CD4-positive, alpha-beta T cell (primary cell): ENCODE measurements at regions of chr1 and their contacts with region 1.

Region 1: GRCh38 chr1:193121616-193122593 is at the start of gene CDC73:
- DNase-seq: peak; percentile 97 to 100 (median 99)
- ATAC-seq: peak; percentile 92
- H3K4me3 ChIP-seq: peak within 1 kb of the TSS; percentile 96
- H3K4me3 Mint-ChIP-seq: peak within 1 kb of the TSS; percentile 97
- H3K27ac ChIP-seq: peak within 1 kb of the TSS; percentile 91 to 94
- H3K27ac Mint-ChIP-seq: peak within 1 kb of the TSS; percentile 97
- H3K4me1 ChIP-seq: peaks cover 27% of the 10 kb centered on the region
- H3K4me1 Mint-ChIP-seq: peaks cover 54% of the 10 kb centered on the region
- H3K27me3 ChIP-seq: no peaks in the 10 kb centered on the region
- H3K27me3 Mint-ChIP-seq: no peaks in the 10 kb centered on the region
- CTCF ChIP-seq: peak; percentile 94
- total RNA-seq, gene CDC73: 65.4 to 66.5 TPM

Region 2: DNA sequence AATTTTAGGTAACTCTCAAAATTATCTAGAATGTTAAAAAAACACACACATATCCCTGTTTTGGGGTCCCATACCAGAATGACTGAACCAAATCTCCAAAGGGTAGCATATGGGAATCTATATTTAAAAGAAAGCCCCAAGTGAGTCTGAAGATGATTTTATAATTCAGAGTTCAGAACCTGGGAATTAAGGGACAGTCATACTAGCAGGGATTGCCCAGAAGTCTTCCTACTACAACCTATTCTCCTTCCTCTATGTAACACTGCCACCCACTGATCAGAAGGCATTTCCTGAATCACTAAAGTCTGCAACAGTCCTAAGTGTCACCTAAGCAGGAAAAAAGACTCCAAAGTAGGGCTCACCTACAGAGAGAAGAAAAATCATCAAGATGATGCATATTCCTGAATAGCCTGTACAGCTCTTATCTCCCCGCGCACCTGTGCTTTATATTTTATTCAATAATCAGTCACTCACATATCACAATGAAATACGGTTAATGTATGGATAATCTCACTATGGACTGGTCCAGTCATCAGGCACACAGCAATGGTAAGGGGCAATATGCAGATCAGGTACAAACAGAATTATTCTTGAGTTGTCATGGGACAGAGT is 541.4 kb before region 1 on chr1:
- CTCF ChIA-PET with region 1: no interaction called
- POLR2A ChIA-PET with region 1: no interaction called
- intact Hi-C with region 1: loop called in 1 of 2 experiments (anchors 5 kb)
- DNase-seq: peak in 4 of 14 experiments; percentile 36 to 72 (median 60)
- ATAC-seq: peak; percentile 30
- H3K4me3 ChIP-seq: no peak overlapping the region
- H3K4me3 Mint-ChIP-seq: no peak overlapping the region
- H3K27ac ChIP-seq: no peak overlapping the region
- H3K27ac Mint-ChIP-seq: peak overlapping the region; percentile 48
- H3K4me1 ChIP-seq: peaks cover 4% of the 10 kb centered on the region
- H3K4me1 Mint-ChIP-seq: peaks cover 46% of the 10 kb centered on the region
- H3K27me3 ChIP-seq: no peaks in the 10 kb centered on the region
- H3K27me3 Mint-ChIP-seq: no peaks in the 10 kb centered on the region
- CTCF ChIP-seq: peak; percentile 65

Region 3: DNA sequence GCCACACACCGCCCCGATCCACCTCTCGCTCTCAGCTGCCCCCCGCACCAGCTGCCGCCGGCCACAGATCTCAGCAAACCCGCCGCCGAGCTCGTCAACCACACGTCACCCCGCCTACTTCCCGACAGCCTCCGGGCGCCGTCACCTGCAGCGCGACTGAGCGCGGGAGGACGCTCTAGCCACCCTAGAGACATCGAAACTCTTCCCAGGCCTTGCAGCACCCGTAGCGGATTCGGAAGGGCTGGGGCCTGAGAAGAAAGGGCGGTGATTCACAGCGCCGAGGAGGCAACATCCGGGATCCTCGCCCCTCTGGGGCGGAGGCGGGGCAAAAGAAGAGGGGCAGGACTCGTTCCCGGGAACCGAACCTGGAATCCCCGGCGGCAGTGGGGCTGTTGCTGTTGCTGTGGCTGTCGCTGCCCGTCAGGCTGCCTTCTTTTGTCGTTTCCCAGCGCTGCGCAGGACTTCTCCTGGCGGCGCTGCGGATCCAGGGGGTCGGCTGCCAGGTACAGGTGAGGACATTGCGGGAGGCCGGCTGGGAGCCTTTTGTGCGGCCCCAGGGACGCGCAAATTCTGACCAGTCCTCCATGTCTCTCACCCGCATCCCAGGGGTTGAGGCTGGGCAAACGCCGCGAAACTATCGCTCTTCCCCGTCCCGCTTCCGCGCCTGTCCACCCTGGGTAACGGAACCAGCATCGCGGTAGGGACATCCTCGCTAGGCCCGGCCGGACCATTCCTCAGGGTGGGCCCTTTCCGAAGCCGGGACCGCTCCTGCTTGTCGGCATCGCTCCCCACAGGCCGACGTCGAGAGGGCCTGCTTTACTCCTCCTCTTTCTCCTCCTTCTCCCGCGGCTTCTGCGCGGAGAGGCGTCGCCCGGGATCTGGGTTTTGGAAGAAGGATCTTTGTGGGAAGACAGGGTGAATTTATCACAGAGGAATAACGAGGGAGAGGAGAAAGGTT is 62.4 kb before region 1 on chr1 and contains the starts of genes RO60 and UCHL5:
- CTCF ChIA-PET with region 1: interaction called, 15 read pairs
- POLR2A ChIA-PET with region 1: interaction called, 42 read pairs
- intact Hi-C with region 1: loop called (anchors 1 to 2 kb)
- DNase-seq: peak; percentile 87 to 99 (median 92)
- ATAC-seq: peak; percentile 96
- H3K4me3 ChIP-seq: peak within 1 kb of the TSS; percentile 95
- H3K4me3 Mint-ChIP-seq: peak within 1 kb of the TSS; percentile 100
- H3K27ac ChIP-seq: peak within 1 kb of the TSS; percentile 83
- H3K27ac Mint-ChIP-seq: peak within 1 kb of the TSS; percentile 96
- H3K4me1 ChIP-seq: peaks cover 24% of the 10 kb centered on the region
- H3K4me1 Mint-ChIP-seq: peaks cover 78% of the 10 kb centered on the region
- H3K27me3 ChIP-seq: no peaks in the 10 kb centered on the region
- H3K27me3 Mint-ChIP-seq: no peaks in the 10 kb centered on the region
- CTCF ChIP-seq: no peak
- total RNA-seq, gene RO60: 46.1 to 46.3 TPM
- total RNA-seq, gene UCHL5: 16.4 to 19.2 TPM

Region 4: DNA sequence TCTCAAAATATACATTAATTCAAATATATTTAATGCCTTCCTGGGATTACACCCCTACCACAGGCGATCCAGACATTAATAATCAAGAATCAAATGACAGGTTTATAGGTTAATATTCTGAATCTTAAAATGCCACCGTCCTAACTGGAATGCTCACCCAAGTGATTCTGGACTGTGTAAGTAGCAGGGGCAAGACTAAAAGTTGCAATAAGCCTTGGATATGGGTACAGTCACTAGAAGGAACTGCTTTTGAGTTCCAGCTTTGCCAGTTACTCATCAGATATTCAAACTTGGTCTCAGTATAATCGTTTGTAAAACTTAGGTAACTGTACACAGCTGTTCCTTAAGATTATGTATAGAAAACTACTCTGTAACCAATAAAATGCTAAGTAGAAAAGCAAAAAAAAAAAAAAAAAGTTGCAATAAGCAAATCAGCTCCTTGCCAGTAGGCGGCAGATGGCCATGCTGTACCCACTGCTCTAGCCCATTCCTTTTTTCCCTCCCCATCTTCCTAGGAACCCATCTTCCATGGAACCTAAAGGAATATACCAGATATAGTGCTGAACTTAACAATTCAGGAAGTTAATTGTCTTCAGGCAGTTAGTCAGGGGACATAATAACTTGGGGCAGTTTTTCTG is 52.0 kb before region 1 on chr1:
- CTCF ChIA-PET with region 1: interaction called, 14 read pairs
- POLR2A ChIA-PET with region 1: no interaction called
- intact Hi-C with region 1: no loop called
- DNase-seq: peak in 3 of 14 experiments; percentile 19 to 37 (median 24)
- ATAC-seq: peak; percentile 52
- H3K4me3 ChIP-seq: no peak overlapping the region
- H3K4me3 Mint-ChIP-seq: peak overlapping the region; percentile 32
- H3K27ac ChIP-seq: peak overlapping the region in 1 of 2 donors; percentile 19
- H3K27ac Mint-ChIP-seq: peak overlapping the region; percentile 68
- H3K4me1 ChIP-seq: peaks cover 8% of the 10 kb centered on the region
- H3K4me1 Mint-ChIP-seq: peaks cover 56% of the 10 kb centered on the region
- H3K27me3 ChIP-seq: no peaks in the 10 kb centered on the region
- H3K27me3 Mint-ChIP-seq: no peaks in the 10 kb centered on the region
- CTCF ChIP-seq: no peak

Region 5: GRCh38 chr1:193104906-193105820 is 16.7 kb before region 1 on chr1 and contains the start of gene GLRX2:
- CTCF ChIA-PET with region 1: interaction called, 7 read pairs
- POLR2A ChIA-PET with region 1: interaction called, 52 read pairs
- intact Hi-C with region 1: loop called (anchors 1 to 2 kb)
- DNase-seq: peak; percentile 28 to 81 (median 58)
- ATAC-seq: peak; percentile 95
- H3K4me3 ChIP-seq: peak within 1 kb of the TSS; percentile 91
- H3K4me3 Mint-ChIP-seq: peak within 1 kb of the TSS; percentile 96
- H3K27ac ChIP-seq: peak within 1 kb of the TSS; percentile 22 to 25
- H3K27ac Mint-ChIP-seq: peak within 1 kb of the TSS; percentile 85
- H3K4me1 ChIP-seq: peaks cover 18% of the 10 kb centered on the region
- H3K4me1 Mint-ChIP-seq: peaks cover 35% of the 10 kb centered on the region
- H3K27me3 ChIP-seq: no peaks in the 10 kb centered on the region
- H3K27me3 Mint-ChIP-seq: no peaks in the 10 kb centered on the region
- CTCF ChIP-seq: no peak
- total RNA-seq, gene GLRX2: 4.3 to 5.5 TPM

Region 6: GRCh38 chr1:193111641-193112090 is 10.2 kb before region 1 on chr1:
- CTCF ChIA-PET with region 1: interaction called, 10 read pairs
- POLR2A ChIA-PET with region 1: interaction called, 52 read pairs
- intact Hi-C with region 1: no loop called
- DNase-seq: peak in 1 of 14 experiments; percentile 11
- ATAC-seq: no peak
- H3K4me3 ChIP-seq: no peak overlapping the region
- H3K4me3 Mint-ChIP-seq: no peak overlapping the region
- H3K27ac ChIP-seq: no peak overlapping the region
- H3K27ac Mint-ChIP-seq: no peak overlapping the region
- H3K4me1 ChIP-seq: no peaks in the 10 kb centered on the region
- H3K4me1 Mint-ChIP-seq: no peaks in the 10 kb centered on the region
- H3K27me3 ChIP-seq: no peaks in the 10 kb centered on the region
- H3K27me3 Mint-ChIP-seq: no peaks in the 10 kb centered on the region
- CTCF ChIP-seq: no peak

Region 7: GRCh38 chr1:193211539-193211938 is 89.6 kb after region 1 on chr1:
- CTCF ChIA-PET with region 1: no interaction called
- POLR2A ChIA-PET with region 1: no interaction called
- intact Hi-C with region 1: no loop called
- DNase-seq: peak in 1 of 14 experiments; percentile 5
- ATAC-seq: no peak
- H3K4me3 ChIP-seq: no peak overlapping the region
- H3K4me3 Mint-ChIP-seq: no peak overlapping the region
- H3K27ac ChIP-seq: no peak overlapping the region
- H3K27ac Mint-ChIP-seq: no peak overlapping the region
- H3K4me1 ChIP-seq: no peaks in the 10 kb centered on the region
- H3K4me1 Mint-ChIP-seq: peaks cover 38% of the 10 kb centered on the region
- H3K27me3 ChIP-seq: no peaks in the 10 kb centered on the region
- H3K27me3 Mint-ChIP-seq: no peaks in the 10 kb centered on the region
- CTCF ChIP-seq: no peak